ENCODE measurements at regions of chr1 and their contacts with region 1.

Region 1: DNA sequence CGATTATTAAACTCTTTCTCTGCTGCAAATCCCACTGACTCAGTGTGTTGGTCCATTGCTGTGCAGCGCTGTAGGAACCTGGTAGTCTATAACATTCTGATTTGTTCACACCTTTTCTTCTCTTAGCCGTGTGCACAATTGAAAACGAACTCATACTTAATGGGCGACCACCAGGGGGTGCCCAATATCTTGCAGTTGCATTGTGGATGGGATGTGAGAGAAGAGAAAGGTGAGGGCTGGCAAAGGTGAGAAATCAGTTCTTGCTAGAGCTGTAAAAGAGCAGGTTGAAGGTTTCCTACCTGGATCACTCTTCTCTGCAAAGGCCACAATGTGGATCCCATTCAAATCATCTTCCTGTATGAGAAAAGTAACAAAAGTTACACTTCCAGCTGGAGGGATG is 51.0 kb downstream of the CASQ2 start:
- DNase-seq: peak in 1 of 2 experiments; percentile 81
- H3K4me3 ChIP-seq: no peak overlapping the region
- H3K27ac ChIP-seq: no peak overlapping the region
- H3K4me1 ChIP-seq: peaks cover 0 to 4% (median 0%) of the 10 kb centered on the region in 4 experiments; a peak in 3 of 7 replicates
- H3K27me3 ChIP-seq: no peaks in the 10 kb centered on the region
- CTCF ChIP-seq: peak; percentile 35 to 83 (median 68)
- EP300 ChIP-seq: no peak
- POLR2A ChIP-seq: no peak
- RAD21 ChIP-seq: peak; percentile 85 to 92

Region 2: GRCh38 chr1:115729756-115730155 is 12.2 kb after region 1 on chr1:
- CTCF ChIA-PET with region 1: interaction called, 14 read pairs
- POLR2A ChIA-PET with region 1: no interaction called
- DNase-seq: no peak
- H3K4me3 ChIP-seq: no peak overlapping the region
- H3K27ac ChIP-seq: no peak overlapping the region
- H3K4me1 ChIP-seq: no peaks in the 10 kb centered on the region
- H3K27me3 ChIP-seq: no peaks in the 10 kb centered on the region
- CTCF ChIP-seq: no peak
- EP300 ChIP-seq: no peak
- POLR2A ChIP-seq: no peak
- RAD21 ChIP-seq: no peak